ENCODE measurements at regions of chr1 and their contacts with region 1.

Region 1: DNA sequence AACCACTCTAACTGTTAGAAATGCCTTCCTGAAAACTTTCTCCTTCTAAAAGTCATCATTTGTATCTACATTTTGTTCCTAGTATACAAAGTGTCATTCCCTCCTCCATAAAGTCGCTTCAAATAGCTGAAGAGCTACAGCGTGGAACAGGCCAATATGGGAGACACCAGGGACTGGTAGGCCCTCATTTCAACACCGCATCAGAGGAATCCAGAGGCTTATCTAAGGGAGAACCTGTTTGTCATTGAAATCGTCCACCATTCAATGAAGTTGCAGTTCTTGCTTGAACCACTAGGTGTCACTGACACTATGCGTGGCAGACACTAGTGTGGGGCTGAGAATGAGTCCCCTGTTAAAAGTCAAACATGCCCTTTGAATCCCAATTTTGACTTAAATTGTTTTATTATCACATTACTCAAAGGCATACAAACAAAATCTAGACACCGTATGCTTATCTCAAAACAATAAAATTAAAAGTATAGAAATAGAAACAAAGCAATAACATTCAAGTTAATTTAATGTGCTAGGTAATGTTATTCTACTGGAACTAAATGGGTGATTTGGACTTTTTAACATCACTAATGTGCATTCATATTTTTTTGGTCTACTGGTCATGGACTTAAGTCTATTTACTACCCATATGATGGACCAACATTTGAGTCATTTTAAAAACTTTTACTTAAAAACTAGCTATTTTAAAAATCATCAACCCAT is 182.3 kb downstream of the FCRL5 start:
- H3K4me3 Mint-ChIP-seq: no peak overlapping the region
- H3K27ac Mint-ChIP-seq: no peak overlapping the region
- H3K4me1 Mint-ChIP-seq: no peaks in the 10 kb centered on the region
- H3K27me3 Mint-ChIP-seq: peaks cover 4% of the 10 kb centered on the region

Region 2: DNA sequence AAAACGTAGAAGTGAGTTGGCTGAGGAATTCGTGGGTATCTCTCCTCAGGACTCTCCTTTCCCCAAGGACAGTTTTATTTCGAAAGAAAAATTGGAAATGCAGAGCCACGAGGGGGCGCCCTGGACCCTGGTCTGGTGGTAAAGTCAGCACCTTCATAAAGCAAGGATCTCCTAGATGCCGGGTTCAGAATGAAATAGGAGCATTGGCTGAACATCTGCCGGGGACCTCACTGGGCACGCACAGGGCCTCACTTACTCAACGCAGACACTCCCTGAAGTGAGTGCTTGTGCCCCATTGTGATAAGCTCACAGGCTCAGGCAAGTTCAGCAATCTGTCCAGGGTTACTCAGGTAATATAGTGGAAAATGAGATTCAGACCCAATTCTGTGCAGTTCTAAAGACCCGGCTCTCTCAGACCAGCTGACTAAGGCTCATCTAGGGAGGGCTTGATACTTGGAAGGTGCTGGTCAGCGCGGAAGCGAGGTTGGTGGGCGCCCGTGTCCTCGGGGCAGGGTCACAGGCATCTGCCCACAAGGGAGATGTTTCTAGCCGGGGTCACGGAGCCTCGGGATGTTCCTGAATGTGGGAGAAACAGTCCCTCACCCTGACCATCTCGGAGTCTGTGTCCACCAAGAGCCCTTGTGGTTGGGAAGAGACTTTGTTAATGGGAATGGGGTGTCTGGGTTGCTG is 176.1 kb before region 1 on chr1:
- intact Hi-C with region 1: loop called (anchors 10 kb)
- H3K4me3 Mint-ChIP-seq: no peak overlapping the region
- H3K27ac Mint-ChIP-seq: no peak overlapping the region
- H3K4me1 Mint-ChIP-seq: no peaks in the 10 kb centered on the region
- H3K27me3 Mint-ChIP-seq: peaks cover 53% of the 10 kb centered on the region

Region 3: GRCh38 chr1:157233131-157233530 is 136.8 kb before region 1 on chr1:
- intact Hi-C with region 1: no loop called
- H3K4me3 Mint-ChIP-seq: no peak overlapping the region
- H3K27ac Mint-ChIP-seq: no peak overlapping the region
- H3K4me1 Mint-ChIP-seq: no peaks in the 10 kb centered on the region
- H3K27me3 Mint-ChIP-seq: peaks cover 26% of the 10 kb centered on the region

Measured in dendritic cell treated with granulocyte-macrophage colony-stimulating factor and Interleukin-4, amounts not matched to agents 40 ng/mL and 50 ng/mL, for 4 days (primary cell).